ENCODE measurements at regions of chr3 and their contacts with region 1.

Region 1: GRCh38 chr3:115692887-115693524 is 69.7 kb downstream of the GAP43 start:
- DNase-seq: peak; percentile 88
- H3K4me3 Mint-ChIP-seq: no peak overlapping the region
- H3K27ac Mint-ChIP-seq: no peak overlapping the region
- H3K4me1 Mint-ChIP-seq: no peaks in the 10 kb centered on the region
- H3K27me3 Mint-ChIP-seq: no peaks in the 10 kb centered on the region

Region 2: DNA sequence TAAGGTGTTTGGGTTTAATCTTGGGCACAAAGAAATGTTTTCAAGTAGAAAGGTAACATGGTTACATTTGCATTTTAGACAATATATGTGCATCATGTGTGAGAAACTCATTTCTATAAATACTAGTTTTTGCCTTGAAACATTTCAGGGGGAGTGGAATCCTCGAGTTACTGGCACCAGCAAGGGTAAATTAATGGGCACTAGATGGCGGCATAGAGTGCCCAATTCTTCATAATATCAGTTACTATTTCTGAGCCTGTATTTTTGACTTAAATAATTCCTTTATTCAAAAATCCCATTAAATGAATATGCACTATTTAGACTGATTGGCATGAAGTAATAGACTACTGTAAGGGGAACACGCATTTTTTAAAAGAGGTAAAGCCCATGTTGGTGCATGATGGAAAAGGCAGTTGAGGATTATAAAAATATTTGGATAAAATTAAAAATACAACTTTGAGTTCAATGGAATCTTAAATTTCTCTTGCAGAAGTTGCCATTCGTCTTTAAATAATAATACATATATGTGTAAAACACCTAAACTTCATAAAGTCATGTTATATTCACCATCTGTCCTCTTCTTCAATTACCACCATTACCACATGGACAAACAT is 652.2 kb before region 1 on chr3:
- intact Hi-C with region 1: loop called (anchors 5 kb)
- DNase-seq: peak; percentile 74
- H3K4me3 Mint-ChIP-seq: no peak overlapping the region
- H3K27ac Mint-ChIP-seq: no peak overlapping the region
- H3K4me1 Mint-ChIP-seq: no peaks in the 10 kb centered on the region
- H3K27me3 Mint-ChIP-seq: no peaks in the 10 kb centered on the region

Region 3: DNA sequence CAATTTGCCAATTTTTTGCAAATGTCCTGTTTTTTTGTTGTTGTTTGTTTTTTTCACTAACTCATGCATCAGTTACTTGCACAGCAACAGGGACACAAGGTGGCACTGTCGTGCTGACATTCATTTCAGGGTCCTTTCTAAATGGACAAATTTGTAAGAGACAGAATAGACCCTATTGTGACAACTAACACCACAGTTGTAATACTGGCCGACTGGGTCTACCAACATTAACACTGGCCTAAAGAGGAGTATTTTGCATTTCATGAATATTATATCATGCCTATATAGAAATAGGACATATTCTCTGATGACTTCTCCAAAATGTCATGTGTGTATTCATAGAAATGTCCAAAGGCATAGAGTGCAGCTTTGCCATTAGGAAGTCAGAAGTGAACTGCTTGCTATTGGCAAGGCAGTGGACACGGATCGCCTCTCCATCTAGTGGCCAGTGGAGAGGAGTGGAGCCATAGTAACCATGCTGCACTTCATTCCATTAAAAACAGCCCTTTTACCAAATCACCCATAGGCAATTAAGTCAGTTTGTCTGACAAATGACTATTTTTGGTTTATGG is 600.7 kb before region 1 on chr3:
- intact Hi-C with region 1: loop called (anchors 1 kb)
- DNase-seq: peak; percentile 87
- H3K4me3 Mint-ChIP-seq: no peak overlapping the region
- H3K27ac Mint-ChIP-seq: no peak overlapping the region
- H3K4me1 Mint-ChIP-seq: no peaks in the 10 kb centered on the region
- H3K27me3 Mint-ChIP-seq: no peaks in the 10 kb centered on the region

Region 4: DNA sequence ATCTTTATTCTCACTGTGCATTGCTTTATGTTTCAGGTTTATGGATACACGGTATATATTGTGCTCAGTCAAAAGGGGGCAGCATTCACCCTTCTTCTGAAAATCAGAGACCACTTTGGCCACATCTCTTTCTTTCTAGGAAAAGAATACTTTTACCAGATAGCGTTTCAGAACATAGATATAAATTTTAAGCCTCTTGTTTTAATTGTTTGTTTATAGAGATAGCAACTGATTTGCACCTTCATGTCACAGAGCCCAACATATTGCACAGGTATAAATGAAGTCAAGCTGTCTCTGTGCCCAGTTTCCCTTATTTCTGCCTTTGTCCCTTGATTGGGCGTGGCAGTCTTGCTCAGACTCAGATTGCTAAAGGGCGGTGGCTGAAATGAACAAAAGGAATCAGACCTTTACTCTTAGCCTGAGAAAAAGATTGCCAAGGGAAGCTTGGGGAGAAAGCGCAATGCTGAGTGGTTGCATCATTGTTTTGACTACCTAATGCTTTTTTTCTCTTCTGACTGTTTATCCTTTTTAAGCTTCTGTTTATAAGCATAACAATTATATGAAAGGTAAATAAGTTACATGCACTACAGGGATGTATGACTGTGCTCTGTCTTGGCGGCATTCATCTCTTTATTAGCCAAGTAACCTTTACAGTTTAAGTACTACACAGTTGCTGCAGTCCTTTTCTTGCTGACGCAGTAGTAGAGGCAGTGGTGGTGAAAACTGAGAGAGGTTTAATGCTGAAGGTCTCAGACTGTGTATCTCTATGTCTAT is 475.1 kb before region 1 on chr3:
- intact Hi-C with region 1: loop called (anchors 10 kb)
- DNase-seq: peak; percentile 61
- H3K4me3 Mint-ChIP-seq: no peak overlapping the region
- H3K27ac Mint-ChIP-seq: no peak overlapping the region
- H3K4me1 Mint-ChIP-seq: no peaks in the 10 kb centered on the region
- H3K27me3 Mint-ChIP-seq: peaks cover under 1% of the 10 kb centered on the region

Region 5: GRCh38 chr3:115588201-115589115 is 104.5 kb before region 1 on chr3:
- intact Hi-C with region 1: no loop called
- DNase-seq: no peak
- H3K4me3 Mint-ChIP-seq: no peak overlapping the region
- H3K27ac Mint-ChIP-seq: no peak overlapping the region
- H3K4me1 Mint-ChIP-seq: no peaks in the 10 kb centered on the region
- H3K27me3 Mint-ChIP-seq: peaks cover 5% of the 10 kb centered on the region

Region 6: GRCh38 chr3:115814778-115815380 is 121.9 kb after region 1 on chr3:
- intact Hi-C with region 1: loop called (anchors 5 kb)
- DNase-seq: peak; percentile 90
- H3K4me3 Mint-ChIP-seq: no peak overlapping the region
- H3K27ac Mint-ChIP-seq: no peak overlapping the region
- H3K4me1 Mint-ChIP-seq: no peaks in the 10 kb centered on the region
- H3K27me3 Mint-ChIP-seq: peaks cover 13% of the 10 kb centered on the region

Region 7: DNA sequence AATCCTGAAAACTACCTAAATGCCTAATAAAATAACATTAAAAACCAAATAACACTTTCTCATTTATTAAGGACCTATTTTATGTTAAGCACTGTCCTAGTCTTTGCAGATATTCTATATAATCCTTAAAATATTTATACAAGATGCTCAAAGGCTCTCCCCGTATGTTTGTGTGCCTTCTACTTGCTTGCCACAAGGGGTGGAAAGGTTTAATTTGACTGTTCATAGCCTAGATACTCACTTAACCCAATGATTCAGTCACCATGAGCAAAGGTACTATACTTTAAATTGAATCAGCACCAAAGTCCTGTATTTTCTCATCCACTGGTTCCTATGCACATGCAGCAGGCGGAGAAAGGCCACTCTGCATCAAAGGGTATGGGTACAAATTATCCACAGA is 720.3 kb after region 1 on chr3:
- intact Hi-C with region 1: no loop called
- DNase-seq: no peak
- H3K4me3 Mint-ChIP-seq: no peak overlapping the region
- H3K27ac Mint-ChIP-seq: no peak overlapping the region
- H3K4me1 Mint-ChIP-seq: no peaks in the 10 kb centered on the region
- H3K27me3 Mint-ChIP-seq: no peaks in the 10 kb centered on the region

Measured in activated CD4-positive, alpha-beta T cell treated with anti-CD3 and anti-CD28 coated beads, Interleukin-2, amount 10 ng/mL, durations not matched to agents 24 days and 14 days (primary cell).